ENCODE measurements at regions of chr3 and their contacts with region 1.

Region 1: GRCh38 chr3:21894459-21895340 is 143.7 kb upstream of the ZNF385D start:
- DNase-seq: no peak
- H3K4me3 ChIP-seq: no peak overlapping the region
- H3K27ac ChIP-seq: no peak overlapping the region
- H3K4me1 ChIP-seq: no peaks in the 10 kb centered on the region; a peak in 1 of 7 replicates
- H3K27me3 ChIP-seq: no peaks in the 10 kb centered on the region
- CTCF ChIP-seq: peak in 2 of 3 experiments; percentile 18 to 40; a peak in 2 of 4 replicates
- EP300 ChIP-seq: no peak
- POLR2A ChIP-seq: no peak
- RAD21 ChIP-seq: peak; percentile 60 to 78

Region 2: DNA sequence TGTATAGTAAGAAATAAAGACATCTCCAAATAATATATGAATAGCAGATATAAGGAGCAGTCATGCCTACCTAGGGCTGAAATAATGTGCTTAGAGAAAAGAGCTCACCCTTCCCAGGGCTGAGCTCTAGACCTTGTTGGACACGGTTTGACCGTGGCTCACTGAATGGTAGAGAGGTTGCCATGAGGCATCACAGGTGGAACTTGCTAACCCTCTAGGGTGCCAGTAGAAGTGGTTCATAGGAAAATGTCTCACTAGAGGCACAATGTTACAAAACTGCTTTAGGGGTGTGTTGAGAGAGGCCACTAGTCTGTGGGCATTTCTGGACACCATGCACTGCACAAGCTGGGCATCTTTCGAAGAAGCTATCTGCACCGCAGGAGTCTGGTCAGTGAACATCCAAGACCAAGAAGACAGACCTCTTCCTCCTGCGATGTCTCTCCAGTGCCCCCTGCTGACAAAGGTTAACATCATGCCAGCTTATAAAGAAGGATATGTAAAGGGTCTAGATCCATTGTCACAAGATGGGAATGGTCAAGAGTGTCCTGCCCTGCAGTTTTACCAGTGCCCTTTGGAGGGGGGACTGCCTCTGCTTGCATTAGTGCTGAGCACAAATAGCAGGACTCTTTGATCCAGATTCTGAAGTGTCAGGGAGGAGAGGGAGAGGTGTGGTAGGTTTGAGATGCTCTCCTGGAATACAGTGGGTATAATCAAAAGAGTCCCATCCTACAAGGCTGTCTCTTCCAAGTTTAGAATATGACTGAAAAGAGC is 410.5 kb before region 1 on chr3:
- CTCF ChIA-PET with region 1: interaction called, 21 read pairs
- POLR2A ChIA-PET with region 1: no interaction called
- DNase-seq: peak; percentile 25 to 77
- H3K4me3 ChIP-seq: no peak overlapping the region
- H3K27ac ChIP-seq: no peak overlapping the region
- H3K4me1 ChIP-seq: no peaks in the 10 kb centered on the region
- H3K27me3 ChIP-seq: no peaks in the 10 kb centered on the region
- CTCF ChIP-seq: peak; percentile 21 to 80 (median 67)
- EP300 ChIP-seq: no peak
- POLR2A ChIP-seq: no peak
- RAD21 ChIP-seq: peak; percentile 82 to 84

Region 3: GRCh38 chr3:21752749-21753347 is 141.9 kb before region 1 on chr3:
- CTCF ChIA-PET with region 1: interaction called, 36 read pairs
- POLR2A ChIA-PET with region 1: no interaction called
- DNase-seq: no peak
- H3K4me3 ChIP-seq: no peak overlapping the region
- H3K27ac ChIP-seq: no peak overlapping the region
- H3K4me1 ChIP-seq: peaks cover 0 to 10% (median 3%) of the 10 kb centered on the region in 4 experiments; a peak in 3 of 7 replicates
- H3K27me3 ChIP-seq: no peaks in the 10 kb centered on the region; a peak in 1 of 7 replicates
- CTCF ChIP-seq: peak in 2 of 3 experiments; percentile 60 to 82; a peak in 3 of 4 replicates
- EP300 ChIP-seq: no peak
- POLR2A ChIP-seq: no peak
- RAD21 ChIP-seq: peak; percentile 83 to 84

Region 4: GRCh38 chr3:21879184-21879886 is 15.4 kb before region 1 on chr3:
- CTCF ChIA-PET with region 1: interaction called, 17 read pairs
- POLR2A ChIA-PET with region 1: no interaction called
- DNase-seq: no peak
- H3K4me3 ChIP-seq: no peak overlapping the region
- H3K27ac ChIP-seq: no peak overlapping the region
- H3K4me1 ChIP-seq: no peaks in the 10 kb centered on the region
- H3K27me3 ChIP-seq: no peaks in the 10 kb centered on the region
- CTCF ChIP-seq: no peak
- EP300 ChIP-seq: no peak
- POLR2A ChIP-seq: no peak
- RAD21 ChIP-seq: no peak

Measured in H1 (cell line).